Mammary epithelial cell (primary cell): ENCODE measurements at regions of chr2 and their contacts with region 1.

Region 1: GRCh38 chr2:157327621-157328500 is 2.2 kb upstream of the ERMN start:
- DNase-seq: peak; percentile 56
- H3K4me3 ChIP-seq: no peak overlapping the region
- H3K27ac ChIP-seq: no peak overlapping the region
- H3K4me1 ChIP-seq: no peaks in the 10 kb centered on the region
- H3K27me3 ChIP-seq: no peaks in the 10 kb centered on the region
- CTCF ChIP-seq: peak; percentile 90 to 97

Region 2: DNA sequence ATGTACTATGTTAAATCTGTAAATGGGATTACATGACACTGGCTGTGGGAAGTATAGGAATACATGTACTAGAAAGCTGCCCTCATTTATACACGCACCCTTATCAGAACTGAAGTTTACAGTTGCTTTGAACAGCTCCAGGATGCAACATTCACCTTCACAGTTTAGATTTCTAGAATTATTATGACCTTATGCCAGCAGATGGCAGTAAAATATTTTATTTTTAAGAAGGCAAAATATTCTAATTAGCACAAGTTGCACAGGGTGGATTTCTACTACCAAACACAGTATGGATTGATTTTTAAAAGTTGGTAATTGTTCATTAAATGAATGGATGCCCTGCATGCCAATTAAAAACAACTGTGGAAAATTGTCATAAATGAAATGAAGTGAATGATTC is 1958.9 kb before region 1 on chr2:
- CTCF ChIA-PET with region 1: no interaction called
- dilution Hi-C with region 1: no loop called
- in situ Hi-C with region 1: loop called in 1 of 2 experiments (anchors 25 kb)
- intact Hi-C with region 1: no loop called
- DNase-seq: peak; percentile 2
- H3K4me3 ChIP-seq: no peak overlapping the region
- H3K27ac ChIP-seq: no peak overlapping the region
- H3K4me1 ChIP-seq: no peaks in the 10 kb centered on the region
- H3K27me3 ChIP-seq: no peaks in the 10 kb centered on the region
- CTCF ChIP-seq: peak; percentile 32 to 33

Region 3: GRCh38 chr2:157460384-157460837 is 132.6 kb after region 1 on chr2:
- CTCF ChIA-PET with region 1: no interaction called
- dilution Hi-C with region 1: no loop called
- in situ Hi-C with region 1: no loop called
- intact Hi-C with region 1: loop called (anchors 2 kb)
- DNase-seq: no peak
- H3K4me3 ChIP-seq: no peak overlapping the region
- H3K27ac ChIP-seq: no peak overlapping the region
- H3K4me1 ChIP-seq: no peaks in the 10 kb centered on the region
- H3K27me3 ChIP-seq: peaks cover 7% of the 10 kb centered on the region
- CTCF ChIP-seq: no peak